ENCODE measurements at regions of chr2 and their contacts with region 1.

Region 1: GRCh38 chr2:24827321-24828237 is 34.4 kb downstream of the CENPO start:
- DNase-seq: peak; percentile 61
- H3K4me3 ChIP-seq: no peak overlapping the region
- CTCF ChIP-seq: peak; percentile 89

Region 2: DNA sequence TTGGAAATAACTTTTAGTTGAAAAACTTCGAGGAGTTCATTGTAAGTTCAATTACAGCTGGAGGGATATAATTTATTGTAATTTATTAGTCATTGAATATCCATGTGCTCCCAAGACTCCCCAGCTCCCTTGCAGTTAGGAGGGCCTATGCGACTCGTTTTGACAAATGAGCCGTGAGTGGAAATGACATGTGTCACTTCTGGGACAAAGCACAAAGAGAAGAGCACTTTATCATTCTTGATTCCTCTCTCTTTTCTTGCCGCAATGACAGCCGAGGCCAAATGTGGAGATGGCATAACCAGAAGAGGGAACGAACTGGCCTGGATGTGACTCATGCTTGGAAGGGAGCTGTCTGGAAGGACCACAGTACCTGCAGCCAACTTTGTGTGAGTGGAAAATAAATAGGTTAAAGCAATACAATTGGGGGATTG is 423.1 kb before region 1 on chr2:
- CTCF ChIA-PET with region 1: interaction called, 296 read pairs
- POLR2A ChIA-PET with region 1: interaction called, 3 read pairs
- DNase-seq: no peak
- H3K4me3 ChIP-seq: no peak overlapping the region
- CTCF ChIP-seq: no peak

Region 3: DNA sequence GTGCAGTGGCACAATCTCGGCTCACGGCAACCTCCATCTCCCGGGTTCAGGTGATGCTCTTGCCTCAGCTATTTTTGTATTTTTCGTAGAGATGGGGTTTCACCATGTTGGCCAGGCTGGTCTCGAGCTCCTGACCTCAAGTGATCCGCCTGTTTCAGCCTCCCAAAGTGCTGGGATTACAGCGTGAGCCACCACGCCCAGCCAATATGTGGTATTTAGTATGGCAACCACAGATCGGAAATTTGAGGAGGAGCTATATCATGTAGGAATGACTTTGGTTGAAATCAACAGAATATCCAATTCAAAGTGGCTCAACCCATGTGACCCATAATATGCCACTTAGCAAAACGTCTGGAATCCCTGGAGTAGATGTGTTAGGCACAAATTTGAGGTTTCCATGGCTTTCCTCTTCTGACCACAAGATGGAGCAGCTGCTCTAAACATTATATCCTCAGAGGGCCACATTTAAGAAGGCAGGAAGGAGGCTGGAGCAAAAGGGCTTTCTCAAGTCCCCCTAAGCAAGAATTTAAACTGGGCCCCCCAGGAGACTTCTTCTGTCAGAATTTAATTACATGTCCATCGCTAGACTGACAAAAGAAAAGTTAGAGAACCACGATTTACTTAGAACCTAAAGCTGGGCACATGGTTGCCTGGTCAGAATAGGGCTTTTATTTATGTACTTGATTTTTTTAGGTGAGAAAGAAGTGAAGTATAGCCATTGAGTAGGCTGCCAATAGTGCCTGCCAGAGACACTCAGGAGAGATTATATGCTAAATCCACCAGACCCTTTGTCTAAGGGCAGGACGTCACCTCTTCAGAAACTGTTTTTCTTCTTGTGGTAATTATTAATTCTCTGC is 417.7 kb before region 1 on chr2:
- CTCF ChIA-PET with region 1: interaction called, 296 read pairs
- POLR2A ChIA-PET with region 1: interaction called, 3 read pairs
- DNase-seq: peak; percentile 17
- H3K4me3 ChIP-seq: no peak overlapping the region
- CTCF ChIP-seq: peak; percentile 73

Region 4: GRCh38 chr2:24421668-24422067 is 405.9 kb before region 1 on chr2:
- CTCF ChIA-PET with region 1: interaction called, 137 read pairs
- POLR2A ChIA-PET with region 1: no interaction called
- DNase-seq: no peak
- H3K4me3 ChIP-seq: no peak overlapping the region
- CTCF ChIP-seq: peak; percentile 53

Region 5: DNA sequence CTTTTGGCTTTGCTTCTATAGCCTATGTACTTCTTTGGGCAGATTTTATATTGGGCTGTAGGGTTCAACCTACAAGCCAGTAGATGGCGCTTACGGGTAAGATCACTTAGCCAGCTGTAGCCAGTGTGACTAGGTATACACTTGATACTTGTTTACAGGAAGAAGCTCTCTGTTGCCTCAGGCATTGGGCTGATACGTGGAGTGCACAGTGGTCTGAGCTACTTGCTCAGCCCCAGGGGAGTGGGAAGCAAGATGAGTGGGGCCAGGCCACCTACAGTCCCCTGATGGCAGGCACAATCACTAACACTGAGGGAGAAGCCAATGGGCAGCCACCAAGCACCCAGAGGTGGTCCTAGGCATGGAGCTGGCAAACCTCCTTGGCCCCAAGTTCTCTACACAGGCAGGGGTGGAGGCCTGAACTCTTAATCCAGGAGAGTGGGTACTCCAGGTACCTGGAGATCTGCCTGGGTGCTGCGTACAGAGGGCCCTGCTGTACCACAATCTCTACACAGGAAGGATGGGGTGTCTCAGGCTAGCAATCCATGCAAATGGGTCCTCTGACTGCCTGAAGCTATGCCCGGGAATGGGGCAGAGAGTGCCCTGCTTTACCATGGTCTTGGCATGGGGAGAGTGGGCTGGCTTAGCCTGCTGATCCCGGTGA is 214.3 kb before region 1 on chr2:
- CTCF ChIA-PET with region 1: interaction called, 21 read pairs
- POLR2A ChIA-PET with region 1: no interaction called
- DNase-seq: no peak
- H3K4me3 ChIP-seq: no peak overlapping the region
- CTCF ChIP-seq: peak; percentile 10

Region 6: DNA sequence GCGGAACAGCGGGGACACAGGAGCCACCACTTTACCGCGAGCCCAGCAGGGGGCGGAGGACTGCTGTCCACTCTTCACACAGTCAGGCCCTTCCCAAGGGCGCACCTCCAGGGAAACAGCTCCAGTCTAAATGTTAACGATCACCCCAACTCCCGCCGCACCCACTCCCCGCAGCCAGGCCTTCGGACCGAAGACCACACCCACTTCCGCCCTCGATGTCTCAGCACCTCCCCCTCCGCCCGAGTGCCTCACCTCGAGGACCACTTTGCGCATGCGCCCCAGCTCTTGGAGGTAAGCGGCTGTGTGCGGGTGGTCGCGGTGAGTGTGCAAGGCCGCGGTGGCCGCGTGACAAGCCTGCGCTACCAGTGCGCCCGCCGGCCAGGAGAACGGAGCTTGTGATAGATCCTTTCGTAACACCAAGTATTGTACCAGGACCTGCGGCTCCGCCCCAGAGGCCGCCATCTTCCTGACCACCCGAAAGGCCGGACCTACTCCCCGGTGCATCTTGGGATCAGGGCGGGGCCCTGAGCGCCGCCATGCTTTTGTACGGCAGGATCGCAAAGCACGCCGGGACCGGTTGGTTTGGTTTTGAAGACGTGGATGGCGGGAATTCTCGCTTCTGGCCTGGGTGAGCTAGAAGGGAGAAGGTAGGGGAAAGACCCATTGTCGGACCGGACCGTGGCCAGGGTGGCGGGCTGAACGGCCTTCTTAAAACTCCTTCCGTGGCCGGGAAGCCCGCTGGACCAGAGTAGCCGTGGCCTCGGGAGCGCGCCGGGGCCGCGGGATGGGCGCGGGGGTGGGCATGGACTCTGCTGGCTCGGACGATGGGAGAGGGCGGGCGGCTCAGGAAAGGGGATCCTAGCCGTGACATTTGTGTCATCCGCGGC is 34.5 kb before region 1 on chr2 and contains the starts of genes CENPO and PTRHD1:
- CTCF ChIA-PET with region 1: interaction called, 12 read pairs
- POLR2A ChIA-PET with region 1: no interaction called
- DNase-seq: peak; percentile 77
- H3K4me3 ChIP-seq: peak within 1 kb of the TSS; percentile 94
- CTCF ChIP-seq: peak; percentile 76

Region 7: DNA sequence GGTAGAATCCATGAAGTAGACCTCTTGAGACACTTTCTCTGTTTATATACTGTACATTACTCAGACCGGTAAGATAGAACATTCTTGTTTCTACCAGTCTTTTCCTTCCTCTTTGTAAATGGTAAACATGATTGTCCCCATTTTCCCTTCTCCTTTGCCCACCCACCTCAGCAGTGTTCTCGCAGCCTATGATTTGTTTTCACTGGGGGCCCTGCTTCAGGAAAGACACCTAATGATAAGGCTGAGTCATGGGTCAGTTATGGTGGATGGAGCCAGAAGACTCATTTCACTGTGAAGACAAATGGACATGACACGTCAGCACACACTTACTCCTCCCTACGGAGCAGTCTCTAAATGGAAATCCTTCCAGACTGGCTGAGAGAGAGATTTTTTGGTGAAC is 10.7 kb before region 1 on chr2:
- CTCF ChIA-PET with region 1: interaction called, 44 read pairs
- POLR2A ChIA-PET with region 1: no interaction called
- DNase-seq: peak; percentile 67
- H3K4me3 ChIP-seq: no peak overlapping the region
- CTCF ChIP-seq: no peak

Region 8: DNA sequence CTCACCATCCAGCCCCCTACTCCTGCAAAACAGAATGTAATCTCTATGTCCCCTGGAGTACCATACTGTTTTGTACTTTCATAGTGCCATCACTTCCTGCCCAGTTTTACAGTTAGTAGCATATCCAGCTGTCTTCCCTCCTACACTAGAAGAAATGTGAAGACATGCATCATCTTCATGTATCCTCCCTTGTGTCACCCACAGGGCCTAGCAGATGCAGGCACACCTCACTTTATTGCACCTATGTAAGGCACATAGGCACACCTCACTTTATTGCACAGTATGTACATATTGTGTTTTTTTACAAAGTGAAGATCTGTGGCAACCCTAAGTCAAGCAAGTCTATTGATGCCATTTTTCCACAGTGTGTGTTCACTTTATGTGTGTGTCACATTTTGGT is 132.2 kb after region 1 on chr2:
- CTCF ChIA-PET with region 1: no interaction called
- POLR2A ChIA-PET with region 1: no interaction called
- DNase-seq: no peak
- H3K4me3 ChIP-seq: no peak overlapping the region
- CTCF ChIP-seq: no peak

Region 9: DNA sequence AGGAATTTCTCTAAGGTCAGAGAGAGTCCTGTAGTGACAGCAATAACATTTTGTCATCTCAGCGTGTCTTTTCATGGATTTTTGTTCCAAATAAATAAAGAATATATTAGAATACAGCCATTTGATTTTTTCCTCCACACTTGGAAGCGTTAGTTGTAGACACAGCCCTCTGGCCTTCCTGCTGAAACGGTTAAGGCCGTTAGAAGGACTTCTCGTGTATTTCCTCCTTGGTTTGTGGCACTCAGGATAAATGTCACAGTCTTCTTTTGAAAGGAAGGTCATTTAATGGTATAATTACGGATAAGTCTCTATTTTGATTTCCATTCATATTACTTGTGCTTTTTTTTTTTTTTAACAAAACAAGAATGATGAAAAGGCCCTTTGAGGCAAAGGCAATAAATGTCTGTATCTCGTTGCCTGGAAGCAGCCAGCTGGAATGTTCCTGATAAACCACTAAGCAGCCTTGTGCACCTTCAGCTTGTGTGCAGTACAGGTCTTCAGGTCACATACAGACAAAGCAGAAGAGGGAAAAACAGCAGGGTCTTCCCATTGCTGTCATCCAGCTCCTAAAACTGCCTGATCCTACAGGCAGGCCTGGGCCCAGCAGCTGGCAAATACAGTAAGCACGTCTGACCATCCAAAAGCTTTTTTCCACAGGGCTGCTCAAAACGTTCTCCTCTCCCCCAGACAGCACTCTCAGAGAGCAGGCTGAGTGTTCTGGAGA is 228.7 kb after region 1 on chr2:
- CTCF ChIA-PET with region 1: no interaction called
- POLR2A ChIA-PET with region 1: no interaction called
- DNase-seq: no peak
- H3K4me3 ChIP-seq: no peak overlapping the region
- CTCF ChIP-seq: no peak